ENCODE measurements at regions of chr3 and their contacts with region 1.

Region 1: GRCh38 chr3:190513409-190514162 is at the start of gene IL1RAP:
- DNase-seq: peak; percentile 87
- H3K4me3 Mint-ChIP-seq: peak within 1 kb of the TSS; percentile 77
- H3K27ac Mint-ChIP-seq: peak within 1 kb of the TSS; percentile 76
- H3K4me1 Mint-ChIP-seq: peaks cover 30% of the 10 kb centered on the region
- H3K27me3 Mint-ChIP-seq: no peaks in the 10 kb centered on the region
- total RNA-seq, gene IL1RAP: 11.0 to 13.7 TPM

Region 2: GRCh38 chr3:189967254-189967865 is 546.2 kb before region 1 on chr3:
- CTCF ChIA-PET with region 1: no interaction called
- intact Hi-C with region 1: loop called (anchors 5 kb)
- DNase-seq: peak; percentile 28
- H3K4me3 Mint-ChIP-seq: no peak overlapping the region
- H3K27ac Mint-ChIP-seq: no peak overlapping the region
- H3K4me1 Mint-ChIP-seq: no peaks in the 10 kb centered on the region
- H3K27me3 Mint-ChIP-seq: peaks cover 3% of the 10 kb centered on the region

Region 3: DNA sequence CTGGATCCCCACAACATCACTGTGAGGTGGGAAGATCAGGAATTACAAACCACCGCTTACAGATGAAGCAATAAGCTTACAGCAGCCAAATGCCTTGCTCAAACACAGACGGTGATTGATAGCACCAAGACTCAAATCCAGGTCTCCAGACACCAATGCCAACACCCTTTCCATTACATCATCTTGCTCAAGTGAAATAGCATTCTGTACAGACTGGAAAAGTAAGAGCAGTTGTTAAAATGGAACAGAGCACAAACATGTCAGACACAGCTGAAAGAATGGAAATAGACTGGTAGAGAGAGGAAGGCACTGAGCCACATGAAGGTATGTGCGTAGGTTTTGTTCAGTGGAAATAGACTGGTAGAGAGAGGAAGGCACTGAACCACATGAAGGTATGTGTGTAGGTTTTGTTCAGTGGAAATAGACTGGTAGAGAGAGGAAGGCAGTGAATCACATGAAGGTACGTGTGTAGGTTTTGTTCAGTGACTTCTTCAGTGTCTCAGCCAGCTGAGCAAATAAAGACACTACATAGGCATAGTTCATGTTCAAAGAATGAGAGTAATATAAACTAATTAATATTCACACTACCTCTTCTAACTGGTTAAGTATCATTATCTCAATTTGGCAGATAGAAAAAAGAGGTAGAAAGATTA is 206.9 kb before region 1 on chr3:
- CTCF ChIA-PET with region 1: no interaction called
- intact Hi-C with region 1: loop called (anchors 5 kb)
- DNase-seq: peak; percentile 49
- H3K4me3 Mint-ChIP-seq: no peak overlapping the region
- H3K27ac Mint-ChIP-seq: peak overlapping the region; percentile 33
- H3K4me1 Mint-ChIP-seq: peaks cover 25% of the 10 kb centered on the region
- H3K27me3 Mint-ChIP-seq: no peaks in the 10 kb centered on the region

Region 4: GRCh38 chr3:190566043-190566933 is 52.7 kb after region 1 on chr3:
- CTCF ChIA-PET with region 1: interaction called, 5 read pairs
- intact Hi-C with region 1: loop called (anchors 1 kb)
- DNase-seq: peak; percentile 94
- H3K4me3 Mint-ChIP-seq: no peak overlapping the region
- H3K27ac Mint-ChIP-seq: peak overlapping the region; percentile 93
- H3K4me1 Mint-ChIP-seq: peaks cover 38% of the 10 kb centered on the region
- H3K27me3 Mint-ChIP-seq: no peaks in the 10 kb centered on the region

Region 5: GRCh38 chr3:190617185-190617584 is 103.6 kb after region 1 on chr3:
- CTCF ChIA-PET with region 1: interaction called, 5 read pairs
- intact Hi-C with region 1: loop called (anchors 1 kb)
- DNase-seq: peak; percentile 62
- H3K4me3 Mint-ChIP-seq: no peak overlapping the region
- H3K27ac Mint-ChIP-seq: peak overlapping the region; percentile 95
- H3K4me1 Mint-ChIP-seq: peaks cover 48% of the 10 kb centered on the region
- H3K27me3 Mint-ChIP-seq: no peaks in the 10 kb centered on the region

Measured in activated naive CD4-positive, alpha-beta T cell treated with anti-CD3 and anti-CD28 coated beads for 36 hours (primary cell).